Ovary (tissue), 10 donors: ENCODE measurements at regions of chr19 and their contacts with region 1.

Region 1: DNA sequence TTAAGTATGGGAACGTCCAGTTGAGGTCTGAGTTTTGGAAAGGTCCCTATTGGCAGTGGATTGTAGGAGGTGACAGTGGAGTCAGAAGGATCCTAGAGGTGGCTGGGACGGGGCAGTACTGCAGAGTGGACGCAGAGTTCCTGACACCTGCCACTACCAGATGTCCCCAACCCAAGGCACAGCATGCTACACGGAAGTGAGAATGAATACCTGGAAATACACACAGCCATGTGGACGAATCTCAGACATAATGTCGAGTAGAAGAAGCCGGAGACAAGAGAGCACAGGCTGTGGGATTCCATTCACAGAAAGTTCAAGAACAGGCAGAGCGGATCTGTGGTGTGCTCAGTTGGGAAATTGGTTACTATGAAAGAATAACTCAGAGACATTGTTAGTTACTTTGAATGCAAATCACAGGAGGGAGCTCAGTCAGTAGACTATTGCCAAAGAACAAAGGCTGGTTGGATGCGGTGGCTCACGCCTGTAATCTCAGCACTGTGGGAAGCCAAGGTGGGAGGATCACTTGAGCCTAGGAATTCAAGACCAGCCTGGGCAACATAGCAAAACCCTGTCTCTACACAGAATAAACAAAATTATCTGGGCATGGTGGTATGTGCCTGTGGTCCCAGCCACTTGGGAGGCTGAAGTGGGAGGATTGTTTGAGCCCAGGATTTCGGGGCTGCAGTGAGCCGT is 37.4 kb downstream of the RYR1 start:
- DNase-seq: no peak
- H3K4me3 ChIP-seq: no peak overlapping the region
- H3K27ac ChIP-seq: no peak overlapping the region
- H3K4me1 ChIP-seq: no peaks in the 10 kb centered on the region
- H3K27me3 ChIP-seq: no peaks in the 10 kb centered on the region
- CTCF ChIP-seq: no peak
- EP300 ChIP-seq: no peak
- POLR2A ChIP-seq: no peak

Region 2: GRCh38 chr19:38433268-38433733 is 37.6 kb before region 1 on chr19 and contains the start of gene RYR1:
- intact Hi-C with region 1: loop called in 1 of 4 experiments (anchors 1 kb)
- DNase-seq: no peak
- H3K4me3 ChIP-seq: no peak within 1 kb of the TSS
- H3K27ac ChIP-seq: no peak within 1 kb of the TSS
- H3K4me1 ChIP-seq: no peaks in the 10 kb centered on the region
- H3K27me3 ChIP-seq: no peaks in the 10 kb centered on the region
- CTCF ChIP-seq: no peak
- EP300 ChIP-seq: no peak
- POLR2A ChIP-seq: no peak
- total RNA-seq, gene RYR1: 0.57 to 2.6 (median 0.88) TPM